Activated naive CD4-positive, alpha-beta T cell treated with anti-CD3 and anti-CD28 coated beads for 36 hours (primary cell): ENCODE measurements at regions of chr4 and their contacts with region 1.

Region 1: GRCh38 chr4:10006231-10006600 is 15.1 kb downstream of the SLC2A9 start:
- DNase-seq: no peak
- H3K4me3 Mint-ChIP-seq: no peak overlapping the region
- H3K27ac Mint-ChIP-seq: no peak overlapping the region
- H3K4me1 Mint-ChIP-seq: peaks cover 18% of the 10 kb centered on the region
- H3K27me3 Mint-ChIP-seq: no peaks in the 10 kb centered on the region

Region 2: DNA sequence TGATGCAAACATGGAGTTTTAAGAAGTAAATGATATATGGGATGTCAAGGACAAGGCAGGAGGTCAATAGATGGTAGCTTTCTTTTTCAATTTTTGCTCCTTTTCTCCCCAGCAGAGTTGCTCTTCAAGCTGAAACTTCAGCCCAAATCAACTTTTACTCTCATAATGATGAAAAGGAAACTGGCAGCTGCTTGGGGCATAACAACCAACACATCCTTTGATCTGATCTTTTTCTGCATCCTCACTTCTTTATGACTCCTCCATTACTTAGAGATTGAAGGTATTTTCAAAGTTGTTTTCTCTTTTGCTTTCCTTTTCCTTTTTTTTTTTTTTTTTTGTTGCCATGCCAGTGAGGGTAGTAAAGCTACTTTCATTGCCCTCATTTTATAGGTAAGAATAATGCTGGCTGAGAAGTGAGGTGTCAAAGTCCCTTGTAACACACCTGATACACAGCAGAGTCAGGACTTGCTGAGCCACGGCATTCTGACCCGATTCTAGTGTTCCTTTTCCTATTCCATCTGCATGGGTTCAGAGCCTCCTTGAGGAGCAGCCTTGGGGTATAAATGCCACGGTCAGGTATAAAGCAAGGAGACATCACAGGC is 11.9 kb before region 1 on chr4:
- CTCF ChIA-PET with region 1: no interaction called
- intact Hi-C with region 1: loop called (anchors 1 kb)
- DNase-seq: peak; percentile 29
- H3K4me3 Mint-ChIP-seq: no peak overlapping the region
- H3K27ac Mint-ChIP-seq: peak overlapping the region; percentile 80
- H3K4me1 Mint-ChIP-seq: peaks cover 21% of the 10 kb centered on the region
- H3K27me3 Mint-ChIP-seq: no peaks in the 10 kb centered on the region

Region 3: GRCh38 chr4:11228546-11228945 is 1222.3 kb after region 1 on chr4:
- CTCF ChIA-PET with region 1: no interaction called
- intact Hi-C with region 1: no loop called
- DNase-seq: no peak
- H3K4me3 Mint-ChIP-seq: no peak overlapping the region
- H3K27ac Mint-ChIP-seq: no peak overlapping the region
- H3K4me1 Mint-ChIP-seq: no peaks in the 10 kb centered on the region
- H3K27me3 Mint-ChIP-seq: no peaks in the 10 kb centered on the region